ENCODE measurements at regions of chr7 and their contacts with region 1.

Region 1: DNA sequence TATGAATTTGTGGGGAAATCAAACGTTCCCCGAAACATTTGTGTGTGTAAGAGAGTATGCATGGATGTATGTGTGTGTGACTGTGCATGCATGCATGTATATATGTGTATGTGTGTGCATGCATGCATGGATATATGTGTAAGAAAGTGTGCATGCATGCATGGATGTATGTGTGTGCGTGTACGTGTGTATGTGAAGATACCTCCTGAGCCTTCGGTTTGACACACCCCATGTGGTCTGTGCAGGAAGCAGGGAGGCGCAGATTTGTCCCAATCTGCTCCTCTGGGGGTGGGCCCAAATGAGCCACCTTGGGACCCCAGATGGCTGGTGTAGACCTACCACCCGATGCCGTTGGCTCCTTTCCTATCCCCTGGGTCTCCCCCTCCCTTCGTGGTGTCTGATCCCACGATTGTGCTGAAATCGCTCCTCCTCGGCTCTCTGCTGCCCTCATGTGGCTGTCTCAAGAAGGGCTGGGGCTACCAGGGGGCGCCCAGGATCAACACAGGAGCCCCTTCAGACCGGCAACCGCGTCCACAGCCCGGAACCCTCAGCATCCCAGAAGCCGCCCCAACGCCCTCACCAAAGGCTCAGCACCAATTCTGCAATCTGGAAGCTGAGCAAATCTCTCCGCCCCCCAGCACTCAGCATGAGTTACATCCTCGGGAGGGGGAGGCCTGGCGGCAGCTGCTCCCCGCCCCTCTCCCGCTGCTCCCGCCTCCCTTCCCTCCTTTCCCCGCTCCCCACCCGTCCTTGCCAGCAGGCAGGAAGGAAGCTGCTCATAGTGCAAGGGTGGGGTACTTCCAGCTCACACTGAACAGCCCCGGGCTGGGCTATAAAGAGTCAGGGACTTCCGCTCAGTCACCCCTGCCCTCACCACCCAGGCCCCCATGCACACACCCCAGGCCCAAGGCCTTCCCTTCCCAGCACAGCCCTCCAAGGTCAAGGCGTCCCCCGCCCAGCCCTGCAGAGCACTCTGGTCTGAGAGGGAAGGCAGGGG is 2.3 kb upstream of the NOS3 start:
- DNase-seq: no peak
- H3K4me3 ChIP-seq: no peak overlapping the region
- H3K27ac ChIP-seq: no peak overlapping the region
- H3K4me1 ChIP-seq: no peaks in the 10 kb centered on the region
- H3K27me3 ChIP-seq: no peaks in the 10 kb centered on the region
- CTCF ChIP-seq: peak; percentile 49 to 63 (median 53)

Region 2: GRCh38 chr7:150838970-150839650 is 149.4 kb before region 1 on chr7:
- intact Hi-C with region 1: no loop called
- DNase-seq: no peak
- H3K4me3 ChIP-seq: no peak overlapping the region
- H3K27ac ChIP-seq: no peak overlapping the region
- H3K4me1 ChIP-seq: no peaks in the 10 kb centered on the region
- H3K27me3 ChIP-seq: no peaks in the 10 kb centered on the region
- CTCF ChIP-seq: no peak

Region 3: DNA sequence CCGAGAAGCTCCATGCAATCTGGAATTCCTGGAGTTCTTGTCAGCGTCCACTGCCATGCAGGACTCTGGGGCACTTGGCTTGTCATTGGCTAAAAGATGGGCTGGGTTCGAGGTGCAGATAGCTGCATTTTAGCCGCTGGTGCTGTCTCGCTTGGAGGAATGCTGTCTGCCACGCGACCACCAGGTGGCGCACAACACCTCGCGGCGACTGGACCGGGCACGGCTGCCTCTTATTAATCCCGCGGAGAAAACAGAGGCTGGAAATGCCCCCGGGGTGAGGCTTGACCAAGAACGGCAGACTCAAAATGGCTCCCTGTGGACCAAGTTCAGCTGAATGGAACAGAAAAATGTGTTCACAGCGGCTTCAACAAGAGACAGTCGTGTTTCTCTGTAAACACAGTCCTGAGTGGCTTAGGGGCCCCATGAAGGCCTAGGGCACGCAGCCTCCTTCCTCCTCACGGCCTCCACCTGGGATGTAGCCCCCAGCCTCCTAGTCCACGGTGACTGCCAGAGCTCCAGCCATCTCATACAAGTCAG is 90.0 kb before region 1 on chr7:
- intact Hi-C with region 1: loop called (anchors 2 kb)
- DNase-seq: peak in 1 of 2 donors; percentile 85
- H3K4me3 ChIP-seq: no peak overlapping the region
- H3K27ac ChIP-seq: no peak overlapping the region
- H3K4me1 ChIP-seq: no peaks in the 10 kb centered on the region
- H3K27me3 ChIP-seq: no peaks in the 10 kb centered on the region
- CTCF ChIP-seq: peak; percentile 71 to 97 (median 91)

Measured in ascending aorta (tissue), 2 donors.